ENCODE measurements at regions of chr9 and their contacts with region 1.

Region 1: DNA sequence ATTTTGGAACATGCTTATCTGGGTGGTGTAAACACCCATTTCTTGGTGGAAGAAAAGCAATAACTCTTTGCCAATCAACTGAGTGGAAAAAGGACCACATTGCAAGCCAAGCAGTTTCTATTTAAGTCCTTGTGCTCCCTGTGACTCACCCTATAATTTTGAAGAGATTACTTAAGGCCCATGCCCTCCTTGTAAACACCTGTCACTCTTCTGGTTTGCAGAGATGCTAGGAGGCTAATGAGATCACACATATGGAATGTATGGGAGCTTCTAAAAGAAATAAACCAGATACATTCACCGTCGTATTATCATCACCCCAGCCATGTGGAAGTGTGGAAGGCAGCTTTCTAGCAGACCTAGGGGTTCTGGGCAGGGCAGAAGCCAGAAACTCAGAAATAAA is 337.1 kb downstream of the GADD45G start:
- DNase-seq: no peak
- H3K4me3 ChIP-seq: no peak overlapping the region
- H3K27ac ChIP-seq: peak overlapping the region; percentile 71 to 79 (median 76)
- H3K4me1 ChIP-seq: peaks cover 0 to 57% (median 52%) of the 10 kb centered on the region in 4 donors
- H3K27me3 ChIP-seq: no peaks in the 10 kb centered on the region
- CTCF ChIP-seq: no peak
- EP300 ChIP-seq: peak; percentile 60 to 96 (median 94)
- POLR2A ChIP-seq: no peak

Region 2: DNA sequence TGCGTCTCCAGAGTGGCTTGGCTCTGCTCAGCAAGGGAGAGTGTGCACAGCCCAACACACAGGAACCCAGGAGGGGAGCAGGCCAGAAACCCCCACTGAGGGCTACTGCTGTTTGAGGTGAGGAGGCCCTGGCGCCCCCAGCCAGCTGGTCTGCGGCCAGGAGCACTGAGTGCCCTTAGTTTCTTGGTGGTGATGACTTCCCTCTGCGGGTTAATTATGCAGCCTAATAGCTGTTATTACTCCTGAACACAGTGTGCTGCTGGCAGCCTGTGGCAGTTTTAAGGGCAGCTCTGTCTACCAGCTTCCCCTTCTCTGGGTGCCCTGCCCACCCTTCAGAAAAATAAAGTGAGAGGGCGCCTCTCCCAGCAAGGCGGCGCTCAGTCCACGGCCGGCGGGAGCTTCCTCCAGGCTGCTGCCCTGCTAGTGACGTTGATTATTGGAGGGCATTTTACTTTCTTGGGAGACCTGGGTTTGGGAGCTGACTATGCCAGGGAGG is 317.9 kb before region 1 on chr9:
- intact Hi-C with region 1: loop called (anchors 1 kb)
- DNase-seq: peak; percentile 88
- H3K4me3 ChIP-seq: no peak overlapping the region
- H3K27ac ChIP-seq: peak overlapping the region; percentile 82 to 88 (median 85)
- H3K4me1 ChIP-seq: peaks cover 0 to 72% (median 48%) of the 10 kb centered on the region in 4 donors
- H3K27me3 ChIP-seq: no peaks in the 10 kb centered on the region
- CTCF ChIP-seq: peak in 1 of 4 experiments; percentile 20
- EP300 ChIP-seq: no peak
- POLR2A ChIP-seq: no peak